Pancreas (tissue), 10 donors: ENCODE measurements at regions of chr9 and their contacts with region 1.

Region 1: GRCh38 chr9:113807173-113808061 is 68.7 kb upstream of the ZNF618 start:
- DNase-seq: peak in 5 of 6 donors; percentile 31 to 72 (median 51)
- ATAC-seq: peak; percentile 70 to 97 (median 94)
- H3K4me3 ChIP-seq: peak overlapping the region in 2 of 4 donors; percentile 29 to 40
- H3K27ac ChIP-seq: no peak overlapping the region
- H3K4me1 ChIP-seq: no peaks in the 10 kb centered on the region
- H3K27me3 ChIP-seq: no peaks in the 10 kb centered on the region
- CTCF ChIP-seq: peak; percentile 74 to 90 (median 82)

Region 2: GRCh38 chr9:113785334-113785733 is 22.1 kb before region 1 on chr9:
- intact Hi-C with region 1: no loop called
- DNase-seq: peak in 2 of 6 donors; percentile 38 to 52
- ATAC-seq: peak in 3 of 4 donors; percentile 41 to 69 (median 45)
- H3K4me3 ChIP-seq: no peak overlapping the region
- H3K27ac ChIP-seq: no peak overlapping the region
- H3K4me1 ChIP-seq: no peaks in the 10 kb centered on the region
- H3K27me3 ChIP-seq: no peaks in the 10 kb centered on the region
- CTCF ChIP-seq: no peak

Region 3: DNA sequence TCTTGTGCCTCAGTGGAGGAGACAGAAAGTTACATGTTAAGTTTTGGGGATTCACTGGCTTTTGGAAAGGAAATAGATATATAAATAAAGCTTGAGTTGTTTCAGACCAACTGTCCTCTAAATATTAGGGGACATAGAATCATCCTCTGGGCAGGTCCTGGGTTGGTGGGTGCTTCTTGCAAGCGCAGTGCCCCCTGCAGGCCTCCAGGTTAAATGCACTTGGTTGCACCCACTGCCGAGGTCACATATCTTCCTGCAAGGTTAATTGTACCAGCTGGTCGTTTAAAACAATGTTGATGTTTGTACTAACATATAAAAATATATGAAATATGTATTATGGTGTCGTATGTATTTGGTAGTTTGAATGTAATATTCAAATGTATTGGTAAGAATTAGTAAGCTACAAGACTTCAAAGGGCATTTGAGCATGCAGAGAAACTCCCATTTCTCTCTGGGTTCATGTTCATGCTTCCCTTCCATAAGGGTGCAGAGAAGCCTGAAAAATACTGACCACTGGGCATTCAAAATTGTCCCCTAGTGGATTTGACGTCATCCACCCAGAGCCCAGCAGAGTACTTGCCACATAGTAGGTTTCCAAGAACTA is 155.7 kb after region 1 on chr9:
- intact Hi-C with region 1: loop called in 1 of 3 experiments (anchors 5 kb)
- DNase-seq: peak in 5 of 6 donors; percentile 42 to 77 (median 62)
- ATAC-seq: peak; percentile 51 to 88 (median 72)
- H3K4me3 ChIP-seq: no peak overlapping the region
- H3K27ac ChIP-seq: no peak overlapping the region
- H3K4me1 ChIP-seq: peaks cover under 1 to 11% (median 4%) of the 10 kb centered on the region in 3 donors
- H3K27me3 ChIP-seq: no peaks in the 10 kb centered on the region
- CTCF ChIP-seq: peak; percentile 49 to 79 (median 66)